ENCODE measurements at regions of chr15 and their contacts with region 1.

Region 1: DNA sequence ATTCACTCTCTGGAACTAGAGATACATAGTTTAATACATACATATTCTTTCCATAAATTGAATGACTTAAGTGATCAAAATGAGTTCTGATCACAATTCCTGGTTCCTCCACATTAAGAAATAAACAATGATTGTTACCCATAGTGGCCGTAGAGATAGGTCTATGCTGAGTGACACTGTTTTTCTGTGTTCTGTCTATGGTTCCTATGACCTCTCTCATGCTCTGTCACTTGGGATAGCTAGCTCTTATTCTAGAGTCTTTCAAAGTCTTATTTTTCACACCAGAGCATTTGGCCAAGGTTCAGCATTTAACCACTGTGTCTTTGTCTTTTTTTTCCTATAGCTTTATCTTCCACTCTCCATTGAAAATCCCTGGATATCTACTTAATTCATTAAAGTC is 132.4 kb downstream of the GOLGA6L6 start:
- DNase-seq: no peak
- ATAC-seq: no peak
- H3K4me3 Mint-ChIP-seq: no peak overlapping the region
- H3K27ac Mint-ChIP-seq: no peak overlapping the region
- H3K4me1 Mint-ChIP-seq: no peaks in the 10 kb centered on the region
- H3K27me3 Mint-ChIP-seq: no peaks in the 10 kb centered on the region

Region 2: DNA sequence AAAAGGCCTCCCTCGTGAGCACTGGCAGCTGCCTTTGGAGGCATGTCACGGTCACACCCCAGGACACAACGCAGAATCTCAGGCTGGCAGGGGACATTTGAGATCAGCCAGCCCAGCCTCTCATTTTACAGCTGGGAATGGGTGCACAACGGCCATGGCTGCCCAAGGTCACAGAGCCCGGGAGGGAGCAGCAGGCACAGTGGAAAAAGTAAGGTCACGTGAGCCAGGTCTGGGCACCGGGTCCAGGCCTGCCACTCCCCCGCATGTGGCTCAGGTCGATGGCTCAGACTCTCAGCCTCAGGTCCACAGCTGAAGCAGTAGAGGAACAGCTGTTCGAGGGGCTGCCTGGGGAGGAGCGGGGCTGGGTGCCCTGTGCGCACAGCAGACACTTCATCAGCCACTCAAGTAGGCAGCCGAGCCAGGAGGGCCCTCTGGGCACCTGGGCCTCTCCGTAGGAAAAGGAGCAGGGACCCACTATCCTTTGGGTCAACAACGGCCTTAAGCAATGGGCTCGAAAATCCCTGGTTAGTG is 128.2 kb before region 1 on chr15:
- CTCF ChIA-PET with region 1: no interaction called
- POLR2A ChIA-PET with region 1: no interaction called
- intact Hi-C with region 1: loop called in 1 of 2 experiments (anchors 5 kb)
- DNase-seq: peak; percentile 21
- ATAC-seq: no peak
- H3K4me3 Mint-ChIP-seq: no peak overlapping the region
- H3K27ac Mint-ChIP-seq: no peak overlapping the region
- H3K4me1 Mint-ChIP-seq: no peaks in the 10 kb centered on the region
- H3K27me3 Mint-ChIP-seq: no peaks in the 10 kb centered on the region

Region 3: DNA sequence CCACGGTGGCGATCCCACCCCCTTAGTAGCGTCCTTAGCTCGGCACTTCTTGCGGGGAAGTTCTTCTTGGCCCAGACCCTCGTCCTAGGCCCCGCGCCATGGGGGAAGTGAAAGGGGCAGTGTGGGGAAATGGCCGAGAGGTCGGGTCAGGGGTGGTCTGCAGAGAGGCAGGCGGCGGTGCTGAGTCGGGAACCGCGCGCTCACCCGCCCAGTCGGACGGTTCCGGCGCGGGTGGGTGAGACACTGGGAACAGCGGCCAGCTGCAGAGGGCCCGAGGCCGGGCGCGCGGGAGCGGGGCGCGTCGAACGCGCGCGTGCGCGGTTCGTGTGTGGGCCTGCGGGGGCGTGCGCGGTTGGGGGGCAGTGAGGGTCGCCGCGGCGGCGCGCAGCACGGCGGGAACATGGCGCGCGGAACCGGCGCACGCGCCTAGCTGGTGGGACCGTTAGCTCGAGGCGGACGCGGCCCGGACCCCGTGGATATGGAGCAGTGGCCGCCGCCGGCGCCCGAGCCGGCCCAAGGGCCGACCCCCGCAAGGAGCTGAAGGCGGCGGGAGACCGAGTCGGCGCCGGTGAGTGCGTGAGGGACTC is 114.5 kb before region 1 on chr15:
- CTCF ChIA-PET with region 1: no interaction called
- POLR2A ChIA-PET with region 1: no interaction called
- intact Hi-C with region 1: loop called in 1 of 2 experiments (anchors 5 kb)
- DNase-seq: no peak
- ATAC-seq: no peak
- H3K4me3 Mint-ChIP-seq: no peak overlapping the region
- H3K27ac Mint-ChIP-seq: no peak overlapping the region
- H3K4me1 Mint-ChIP-seq: no peaks in the 10 kb centered on the region
- H3K27me3 Mint-ChIP-seq: no peaks in the 10 kb centered on the region

Region 4: GRCh38 chr15:20310603-20311002 is 98.6 kb before region 1 on chr15:
- CTCF ChIA-PET with region 1: no interaction called
- POLR2A ChIA-PET with region 1: no interaction called
- intact Hi-C with region 1: loop called in 1 of 2 experiments (anchors 5 kb)
- DNase-seq: no peak
- ATAC-seq: no peak
- H3K4me3 Mint-ChIP-seq: no peak overlapping the region
- H3K27ac Mint-ChIP-seq: no peak overlapping the region
- H3K4me1 Mint-ChIP-seq: no peaks in the 10 kb centered on the region
- H3K27me3 Mint-ChIP-seq: no peaks in the 10 kb centered on the region

Region 5: GRCh38 chr15:20367093-20367492 is 42.2 kb before region 1 on chr15:
- CTCF ChIA-PET with region 1: interaction called, 3 read pairs
- POLR2A ChIA-PET with region 1: no interaction called
- intact Hi-C with region 1: loop called in 1 of 2 experiments (anchors 2 kb)
- DNase-seq: no peak
- ATAC-seq: no peak
- H3K4me3 Mint-ChIP-seq: no peak overlapping the region
- H3K27ac Mint-ChIP-seq: no peak overlapping the region
- H3K4me1 Mint-ChIP-seq: no peaks in the 10 kb centered on the region
- H3K27me3 Mint-ChIP-seq: no peaks in the 10 kb centered on the region

Region 6: GRCh38 chr15:20665641-20666040 is 256.4 kb after region 1 on chr15:
- CTCF ChIA-PET with region 1: no interaction called
- POLR2A ChIA-PET with region 1: no interaction called
- intact Hi-C with region 1: no loop called
- DNase-seq: no peak
- ATAC-seq: no peak
- H3K4me3 Mint-ChIP-seq: no peak overlapping the region
- H3K27ac Mint-ChIP-seq: no peak overlapping the region
- H3K4me1 Mint-ChIP-seq: no peaks in the 10 kb centered on the region
- H3K27me3 Mint-ChIP-seq: no peaks in the 10 kb centered on the region